ENCODE measurements at regions of chr10 and their contacts with region 1.

Region 1: GRCh38 chr10:97903128-97904017 is 53.7 kb downstream of the GOLGA7B start:
- DNase-seq: no peak
- H3K4me3 ChIP-seq: no peak overlapping the region
- H3K27ac ChIP-seq: no peak overlapping the region
- H3K4me1 ChIP-seq: peaks cover 0 to 12% of the 10 kb centered on the region in 2 experiments; a peak in 1 of 4 replicates
- H3K27me3 ChIP-seq: peaks cover 9% of the 10 kb centered on the region; the same call in 1 of the 2 replicates
- CTCF ChIP-seq: no peak
- EP300 ChIP-seq: no peak
- RAD21 ChIP-seq: no peak; the same call in 1 of the 2 replicates

Region 2: GRCh38 chr10:97759158-97759887 is 144.1 kb before region 1 on chr10:
- CTCF ChIA-PET with region 1: interaction called, 10 read pairs
- POLR2A ChIA-PET with region 1: no interaction called
- DNase-seq: peak; percentile 94
- H3K4me3 ChIP-seq: no peak overlapping the region; a peak in 1 of 4 replicates
- H3K27ac ChIP-seq: peak overlapping the region in 1 of 2 experiments; percentile 2; a peak in 1 of 4 replicates
- H3K4me1 ChIP-seq: peaks cover 0 to 6% of the 10 kb centered on the region in 2 experiments; a peak in 1 of 4 replicates
- H3K27me3 ChIP-seq: no peaks in the 10 kb centered on the region
- CTCF ChIP-seq: peak; percentile 86
- EP300 ChIP-seq: 0 out of 4 replicates have a peak, but pooled peaks of 1 of the 2 experiments have one; percentile 11
- RAD21 ChIP-seq: peak; percentile 93

Region 3: DNA sequence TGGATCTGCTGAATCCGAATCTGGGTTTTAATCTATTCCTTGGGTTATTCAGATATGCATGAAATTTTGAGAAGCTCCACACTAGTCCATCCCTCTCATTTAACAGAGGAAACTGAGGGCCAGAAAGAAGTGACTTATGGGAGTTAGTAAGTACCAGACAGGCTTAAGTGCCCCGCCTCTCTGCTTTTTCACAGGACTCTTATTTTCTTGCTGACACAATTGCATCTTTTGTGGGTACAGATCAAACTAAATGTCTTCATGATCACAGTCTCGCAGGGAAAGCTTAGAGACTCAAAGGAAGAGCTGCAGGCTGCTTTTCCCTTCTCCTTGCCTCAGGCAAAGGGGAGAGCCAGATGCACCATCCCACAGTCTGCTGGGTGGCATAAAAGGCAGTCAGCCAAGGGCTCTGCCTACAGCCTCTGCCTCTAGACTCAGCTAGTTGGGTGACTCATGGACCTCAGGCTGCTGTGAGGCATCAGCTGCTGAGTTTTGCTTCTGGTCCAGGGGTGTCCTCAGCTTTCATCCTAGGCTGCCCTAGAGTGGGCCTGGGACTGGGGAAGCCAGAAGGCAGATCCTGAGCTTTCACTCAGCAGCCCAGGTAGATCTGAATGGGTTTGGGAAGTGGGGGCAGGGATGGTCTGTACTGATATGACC is 42.1 kb before region 1 on chr10:
- CTCF ChIA-PET with region 1: no interaction called
- POLR2A ChIA-PET with region 1: no interaction called
- DNase-seq: peak; percentile 47
- H3K4me3 ChIP-seq: no peak overlapping the region
- H3K27ac ChIP-seq: no peak overlapping the region
- H3K4me1 ChIP-seq: peaks cover 0 to 6% of the 10 kb centered on the region in 2 experiments; a peak in 1 of 4 replicates
- H3K27me3 ChIP-seq: peaks cover 16% of the 10 kb centered on the region
- CTCF ChIP-seq: no peak
- EP300 ChIP-seq: no peak
- RAD21 ChIP-seq: no peak

Region 4: GRCh38 chr10:98212196-98212595 is 308.8 kb after region 1 on chr10:
- CTCF ChIA-PET with region 1: no interaction called
- POLR2A ChIA-PET with region 1: no interaction called
- DNase-seq: no peak
- H3K4me3 ChIP-seq: no peak overlapping the region
- H3K27ac ChIP-seq: no peak overlapping the region
- H3K4me1 ChIP-seq: no peaks in the 10 kb centered on the region; a peak in 1 of 4 replicates
- H3K27me3 ChIP-seq: no peaks in the 10 kb centered on the region
- CTCF ChIP-seq: no peak
- EP300 ChIP-seq: no peak
- RAD21 ChIP-seq: no peak

Region 5: GRCh38 chr10:98262571-98262970 is 359.2 kb after region 1 on chr10:
- CTCF ChIA-PET with region 1: no interaction called
- POLR2A ChIA-PET with region 1: no interaction called
- DNase-seq: peak; percentile 48
- H3K4me3 ChIP-seq: no peak overlapping the region
- H3K27ac ChIP-seq: no peak overlapping the region
- H3K4me1 ChIP-seq: peaks cover 0 to 5% of the 10 kb centered on the region in 2 experiments; a peak in 1 of 4 replicates
- H3K27me3 ChIP-seq: no peaks in the 10 kb centered on the region
- CTCF ChIP-seq: peak; percentile 36; the same call in 1 of the 2 replicates
- EP300 ChIP-seq: no peak
- RAD21 ChIP-seq: peak; percentile 47